CD4-positive, alpha-beta memory T cell (primary cell): ENCODE measurements at regions of chr19 and their contacts with region 1.

Region 1: GRCh38 chr19:40662921-40663694 is 27.3 kb downstream of the NUMBL start:
- DNase-seq: peak; percentile 87 to 94 (median 91)
- H3K4me3 ChIP-seq: peak overlapping the region; percentile 52 to 75
- H3K4me3 Mint-ChIP-seq: peak overlapping the region; percentile 82 to 90 (median 86)
- H3K27ac ChIP-seq: peak overlapping the region; percentile 49
- H3K27ac Mint-ChIP-seq: peak overlapping the region; percentile 74 to 95 (median 90)
- H3K4me1 ChIP-seq: peaks cover 16% of the 10 kb centered on the region
- H3K4me1 Mint-ChIP-seq: peaks cover 4 to 14% (median 6%) of the 10 kb centered on the region in 4 donors
- H3K27me3 ChIP-seq: no peaks in the 10 kb centered on the region
- H3K27me3 Mint-ChIP-seq: no peaks in the 10 kb centered on the region

Region 2: GRCh38 chr19:40512473-40513344 is 150.4 kb before region 1 on chr19:
- CTCF ChIA-PET with region 1: no interaction called
- POLR2A ChIA-PET with region 1: no interaction called
- intact Hi-C with region 1: no loop called
- DNase-seq: no peak
- H3K4me3 ChIP-seq: no peak overlapping the region
- H3K4me3 Mint-ChIP-seq: peak overlapping the region in 1 of 8 donors; percentile 68
- H3K27ac ChIP-seq: no peak overlapping the region
- H3K27ac Mint-ChIP-seq: no peak overlapping the region
- H3K4me1 ChIP-seq: peaks cover 8% of the 10 kb centered on the region
- H3K4me1 Mint-ChIP-seq: peaks cover 0 to 15% (median 6%) of the 10 kb centered on the region in 4 donors
- H3K27me3 ChIP-seq: peaks cover 12% of the 10 kb centered on the region
- H3K27me3 Mint-ChIP-seq: peaks cover 39 to 47% of the 10 kb centered on the region in 2 donors

Region 3: GRCh38 chr19:40542202-40542859 is 120.8 kb before region 1 on chr19:
- CTCF ChIA-PET with region 1: no interaction called
- POLR2A ChIA-PET with region 1: no interaction called
- intact Hi-C with region 1: no loop called
- DNase-seq: no peak
- H3K4me3 ChIP-seq: no peak overlapping the region
- H3K4me3 Mint-ChIP-seq: no peak overlapping the region
- H3K27ac ChIP-seq: no peak overlapping the region
- H3K27ac Mint-ChIP-seq: peak overlapping the region in 1 of 7 donors; percentile 18
- H3K4me1 ChIP-seq: no peaks in the 10 kb centered on the region
- H3K4me1 Mint-ChIP-seq: peaks cover 0 to 1% (median under 1%) of the 10 kb centered on the region in 4 donors
- H3K27me3 ChIP-seq: no peaks in the 10 kb centered on the region
- H3K27me3 Mint-ChIP-seq: peaks cover 7 to 9% of the 10 kb centered on the region in 2 donors

Region 4: GRCh38 chr19:40716655-40717324 is 53.7 kb after region 1 on chr19 and contains the starts of genes COQ8B and ITPKC:
- CTCF ChIA-PET with region 1: interaction called, 5 read pairs
- POLR2A ChIA-PET with region 1: interaction called, 11 read pairs
- intact Hi-C with region 1: loop called (anchors 1 kb)
- DNase-seq: peak; percentile 98 to 100 (median 99)
- H3K4me3 ChIP-seq: peak within 1 kb of the TSS; percentile 78 to 83
- H3K4me3 Mint-ChIP-seq: peak within 1 kb of the TSS; percentile 87 to 97 (median 92)
- H3K27ac ChIP-seq: peak within 1 kb of the TSS; percentile 98
- H3K27ac Mint-ChIP-seq: peak within 1 kb of the TSS; percentile 96 to 99 (median 98)
- H3K4me1 ChIP-seq: peaks cover 70% of the 10 kb centered on the region
- H3K4me1 Mint-ChIP-seq: peaks cover 40 to 83% (median 58%) of the 10 kb centered on the region in 4 donors
- H3K27me3 ChIP-seq: no peaks in the 10 kb centered on the region
- H3K27me3 Mint-ChIP-seq: no peaks in the 10 kb centered on the region
- total RNA-seq, gene COQ8B: 48.0 to 54.7 TPM
- total RNA-seq, gene ITPKC: 8.1 to 10.2 TPM

Region 5: DNA sequence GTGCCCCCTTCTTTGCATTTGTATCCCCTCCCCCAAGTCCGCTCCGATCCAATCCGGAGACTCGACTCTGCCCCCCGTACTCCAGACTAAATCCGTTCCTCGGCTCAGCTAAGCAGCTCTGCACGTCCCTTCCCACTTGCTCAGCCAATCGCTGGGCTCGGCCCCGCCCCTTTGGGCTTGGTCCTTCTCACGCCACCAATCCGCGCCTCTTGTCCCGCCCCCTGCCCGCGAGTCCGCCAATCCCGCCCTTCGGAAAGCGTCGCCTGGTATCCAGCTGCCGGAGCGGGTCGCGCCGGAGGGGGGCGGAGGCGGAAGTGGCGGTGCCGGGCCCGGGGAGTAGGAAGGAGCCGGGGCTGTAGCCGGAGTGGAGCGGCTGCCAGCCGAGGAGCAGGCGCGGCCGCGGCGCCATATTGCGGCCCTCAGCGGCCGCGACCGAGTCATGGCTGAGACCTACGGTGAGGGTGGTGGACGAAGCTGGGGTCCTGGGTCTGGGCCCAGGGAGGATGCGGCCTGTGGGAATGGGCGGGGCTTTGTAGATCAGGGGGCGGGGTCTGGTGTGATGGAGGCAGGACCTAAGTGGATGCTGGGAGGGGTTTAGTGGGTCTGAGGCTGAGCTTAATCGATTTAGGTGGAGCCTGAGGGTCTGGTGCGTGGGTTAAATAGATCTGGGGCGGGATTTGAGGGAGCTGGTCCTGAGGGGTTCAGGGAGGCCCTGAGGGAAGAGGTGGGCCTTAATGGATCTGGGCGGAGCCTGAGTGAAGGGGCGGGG is 115.0 kb after region 1 on chr19 and contains the start of gene RAB4B:
- CTCF ChIA-PET with region 1: interaction called, 12 read pairs
- POLR2A ChIA-PET with region 1: interaction called, 29 read pairs
- intact Hi-C with region 1: loop called (anchors 1 kb)
- DNase-seq: peak; percentile 100
- H3K4me3 ChIP-seq: peak within 1 kb of the TSS; percentile 67 to 98
- H3K4me3 Mint-ChIP-seq: peak within 1 kb of the TSS; percentile 92 to 98 (median 95)
- H3K27ac ChIP-seq: peak within 1 kb of the TSS; percentile 89
- H3K27ac Mint-ChIP-seq: peak within 1 kb of the TSS; percentile 95 to 99 (median 99)
- H3K4me1 ChIP-seq: peaks cover 29% of the 10 kb centered on the region
- H3K4me1 Mint-ChIP-seq: peaks cover 24 to 45% (median 31%) of the 10 kb centered on the region in 4 donors
- H3K27me3 ChIP-seq: no peaks in the 10 kb centered on the region
- H3K27me3 Mint-ChIP-seq: no peaks in the 10 kb centered on the region
- total RNA-seq, gene RAB4B: 53.5 to 55.0 TPM

Region 6: GRCh38 chr19:40806488-40807468 is 143.7 kb after region 1 on chr19:
- CTCF ChIA-PET with region 1: interaction called, 38 read pairs
- POLR2A ChIA-PET with region 1: interaction called, 17 read pairs
- intact Hi-C with region 1: loop called (anchors 2 kb)
- DNase-seq: peak; percentile 82 to 92 (median 83)
- H3K4me3 ChIP-seq: peak overlapping the region in 1 of 2 donors; percentile 23
- H3K4me3 Mint-ChIP-seq: peak overlapping the region; percentile 80 to 90 (median 88)
- H3K27ac ChIP-seq: peak overlapping the region; percentile 84
- H3K27ac Mint-ChIP-seq: peak overlapping the region; percentile 91 to 100 (median 99)
- H3K4me1 ChIP-seq: peaks cover 97% of the 10 kb centered on the region
- H3K4me1 Mint-ChIP-seq: peaks cover 63 to 96% (median 78%) of the 10 kb centered on the region in 4 donors
- H3K27me3 ChIP-seq: no peaks in the 10 kb centered on the region
- H3K27me3 Mint-ChIP-seq: no peaks in the 10 kb centered on the region

Region 7: DNA sequence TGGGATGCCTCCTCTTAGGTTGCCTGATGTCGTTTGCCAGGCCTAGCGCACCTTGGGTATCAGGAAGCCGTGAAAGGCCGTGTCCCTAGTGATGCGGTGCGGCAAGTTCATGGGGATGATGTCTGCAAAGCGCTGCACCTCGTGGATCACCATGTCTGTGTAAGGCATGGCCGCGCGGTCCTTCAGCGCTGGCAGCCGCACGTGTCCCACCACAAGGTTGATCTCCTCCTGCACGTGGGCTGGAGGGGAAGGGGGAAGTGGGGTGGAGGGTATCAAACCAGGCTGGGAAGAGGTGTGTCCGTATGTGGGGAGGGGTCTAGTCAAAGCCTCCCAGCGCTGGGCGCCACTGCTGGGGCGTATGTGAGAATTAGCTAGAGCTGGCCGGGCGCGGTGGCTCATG is 159.1 kb after region 1 on chr19:
- CTCF ChIA-PET with region 1: interaction called, 89 read pairs
- POLR2A ChIA-PET with region 1: interaction called, 34 read pairs
- intact Hi-C with region 1: loop called (anchors 1 kb)
- DNase-seq: no peak
- H3K4me3 ChIP-seq: no peak overlapping the region
- H3K4me3 Mint-ChIP-seq: peak overlapping the region in 1 of 8 donors; percentile 6
- H3K27ac ChIP-seq: no peak overlapping the region
- H3K27ac Mint-ChIP-seq: peak overlapping the region in 1 of 7 donors; percentile 57
- H3K4me1 ChIP-seq: peaks cover 40% of the 10 kb centered on the region
- H3K4me1 Mint-ChIP-seq: peaks cover 24 to 63% (median 39%) of the 10 kb centered on the region in 4 donors
- H3K27me3 ChIP-seq: no peaks in the 10 kb centered on the region
- H3K27me3 Mint-ChIP-seq: no peaks in the 10 kb centered on the region

Region 8: DNA sequence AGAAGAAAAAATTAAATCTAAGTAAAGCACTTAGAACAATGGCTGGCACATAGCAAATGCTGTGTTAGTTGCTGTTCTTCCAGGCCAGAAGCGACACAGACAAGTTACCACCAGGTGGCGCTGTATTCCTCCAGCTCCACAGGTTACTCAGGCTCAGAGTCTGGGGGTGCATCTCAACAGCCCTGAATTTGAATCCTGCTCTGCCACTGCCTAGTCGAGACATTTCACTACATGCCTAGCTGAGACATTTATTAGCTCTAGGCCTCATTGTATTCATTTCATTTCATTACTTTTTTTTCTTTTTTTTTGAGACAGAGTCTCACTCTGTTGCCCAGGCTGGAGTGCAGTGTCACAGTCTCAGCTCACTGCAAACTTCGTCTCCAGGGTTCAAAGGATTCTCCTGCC is 311.5 kb after region 1 on chr19:
- CTCF ChIA-PET with region 1: no interaction called
- POLR2A ChIA-PET with region 1: interaction called, 10 read pairs
- intact Hi-C with region 1: loop called (anchors 1 kb)
- DNase-seq: peak; percentile 72 to 79 (median 73)
- H3K4me3 ChIP-seq: no peak overlapping the region
- H3K4me3 Mint-ChIP-seq: no peak overlapping the region
- H3K27ac ChIP-seq: no peak overlapping the region
- H3K27ac Mint-ChIP-seq: peak overlapping the region in 1 of 7 donors; percentile 9
- H3K4me1 ChIP-seq: peaks cover 22% of the 10 kb centered on the region
- H3K4me1 Mint-ChIP-seq: peaks cover 22 to 31% (median 26%) of the 10 kb centered on the region in 4 donors
- H3K27me3 ChIP-seq: no peaks in the 10 kb centered on the region
- H3K27me3 Mint-ChIP-seq: peaks cover 5 to 7% of the 10 kb centered on the region in 2 donors

Region 9: GRCh38 chr19:41310033-41310758 is 647.1 kb after region 1 on chr19 and contains the start of gene CCDC97:
- CTCF ChIA-PET with region 1: interaction called, 4 read pairs
- POLR2A ChIA-PET with region 1: interaction called, 3 read pairs
- intact Hi-C with region 1: loop called (anchors 2 kb)
- DNase-seq: peak; percentile 86 to 92 (median 89)
- H3K4me3 ChIP-seq: peak within 1 kb of the TSS; percentile 82 to 98
- H3K4me3 Mint-ChIP-seq: peak within 1 kb of the TSS; percentile 96 to 100 (median 97)
- H3K27ac ChIP-seq: peak within 1 kb of the TSS; percentile 92
- H3K27ac Mint-ChIP-seq: peak within 1 kb of the TSS; percentile 97 to 100 (median 99)
- H3K4me1 ChIP-seq: peaks cover 76% of the 10 kb centered on the region
- H3K4me1 Mint-ChIP-seq: peaks cover 43 to 87% (median 68%) of the 10 kb centered on the region in 4 donors
- H3K27me3 ChIP-seq: no peaks in the 10 kb centered on the region
- H3K27me3 Mint-ChIP-seq: no peaks in the 10 kb centered on the region
- total RNA-seq, gene CCDC97: 56.4 to 61.4 TPM